Natural killer cell (primary cell): ENCODE measurements at regions of chr12 and their contacts with region 1.

Region 1: DNA sequence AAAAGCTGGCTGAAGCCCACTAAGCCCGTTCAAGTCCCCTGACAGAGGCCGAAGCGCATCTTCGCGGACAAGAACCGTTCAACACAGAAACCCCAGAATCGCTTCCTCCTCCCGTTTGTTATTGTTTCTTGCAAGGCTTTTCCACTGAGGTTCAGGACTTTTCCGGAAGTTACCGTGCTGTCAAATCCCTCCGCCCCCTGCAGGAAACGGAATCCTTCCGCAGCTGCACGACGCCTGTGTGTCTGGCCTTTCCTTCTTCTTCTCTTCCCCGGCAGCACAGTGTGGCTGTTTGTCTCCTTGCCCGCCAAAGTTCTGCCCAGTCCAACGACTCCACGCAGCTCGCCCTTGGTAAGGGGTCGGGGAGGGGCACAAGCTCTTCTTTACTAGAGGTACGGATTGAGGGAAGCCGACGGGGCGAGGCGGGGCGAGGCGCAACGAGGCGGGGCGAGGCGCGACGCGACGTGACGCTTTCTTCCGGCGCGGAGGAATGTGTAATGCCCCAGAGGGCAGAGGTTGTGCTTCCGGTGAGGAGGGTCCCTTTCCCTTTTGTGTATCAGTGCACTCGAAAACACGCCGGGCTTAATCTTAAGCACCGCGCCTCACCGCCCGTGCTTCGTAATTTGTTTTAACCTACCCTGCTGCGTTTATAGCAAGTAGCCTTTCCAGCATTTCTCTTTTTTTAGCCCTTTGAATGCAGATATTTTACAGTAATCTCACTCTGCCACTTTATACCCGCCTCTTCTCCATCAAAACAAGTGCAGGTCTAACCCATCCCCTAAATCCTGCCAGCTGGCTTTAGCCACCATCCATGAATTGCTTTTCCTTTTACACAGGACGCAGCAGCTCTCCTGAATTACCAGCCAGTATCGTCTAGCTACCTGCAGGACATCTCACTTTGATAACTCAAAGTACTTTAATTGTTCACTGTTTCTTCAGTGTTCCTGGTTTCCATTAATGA is at the start of gene KDM5A:
- DNase-seq: peak; percentile 87 to 95
- ATAC-seq: peak; percentile 90 to 94 (median 91)
- H3K4me3 ChIP-seq: peak within 1 kb of the TSS; percentile 77
- H3K4me3 Mint-ChIP-seq: peak within 1 kb of the TSS; percentile 98
- H3K27ac ChIP-seq: peak within 1 kb of the TSS; percentile 89
- H3K27ac Mint-ChIP-seq: peak within 1 kb of the TSS; percentile 99
- H3K4me1 ChIP-seq: peaks cover 9% of the 10 kb centered on the region
- H3K4me1 Mint-ChIP-seq: peaks cover 38 to 43% of the 10 kb centered on the region in 2 donors
- H3K27me3 ChIP-seq: no peaks in the 10 kb centered on the region
- H3K27me3 Mint-ChIP-seq: no peaks in the 10 kb centered on the region
- CTCF ChIP-seq: no peak
- total RNA-seq, gene KDM5A: 175 to 194 (median 184) TPM

Region 2: DNA sequence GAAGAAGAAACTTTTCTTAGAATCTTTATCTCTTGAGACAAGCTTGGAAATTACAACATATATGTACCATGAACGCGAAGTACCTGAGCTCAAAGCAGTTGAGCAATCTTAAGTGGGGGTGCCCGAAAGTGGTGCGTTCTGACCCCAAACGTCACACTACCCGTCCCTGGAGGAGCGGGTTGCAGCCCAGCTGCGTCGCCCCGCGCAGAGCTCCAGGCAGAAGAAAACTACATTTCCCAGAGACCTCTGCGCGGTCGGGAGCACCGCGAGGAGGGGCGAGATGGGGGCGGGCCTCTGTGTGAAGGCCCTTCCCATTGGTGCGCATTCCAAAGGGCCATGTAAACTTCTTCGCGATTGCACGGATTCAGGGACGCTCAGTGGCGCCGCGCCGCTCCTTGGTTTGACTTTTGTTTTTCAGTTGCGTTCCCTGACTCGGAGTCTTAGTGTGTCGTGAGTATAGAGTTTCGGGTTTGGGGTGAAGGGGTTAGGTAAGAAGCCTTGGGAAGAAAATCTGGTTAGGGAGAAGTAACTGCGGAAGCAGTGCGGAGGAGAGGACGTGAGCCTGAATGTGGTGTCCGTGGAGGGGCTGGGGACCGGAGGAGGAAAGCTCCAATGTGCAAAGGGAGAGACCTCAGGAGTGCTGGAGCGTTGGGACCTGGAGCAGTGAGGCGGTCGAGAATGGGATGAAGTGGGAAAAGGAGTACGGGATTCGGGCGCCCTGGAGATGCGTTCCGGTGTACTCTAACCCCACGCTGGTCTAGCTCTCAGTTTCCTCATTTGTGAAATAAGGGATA is 12.0 kb after region 1 on chr12 and contains the start of gene CCDC77:
- intact Hi-C with region 1: loop called (anchors 1 kb)
- DNase-seq: peak; percentile 95 to 97
- ATAC-seq: peak; percentile 100
- H3K4me3 ChIP-seq: peak within 1 kb of the TSS; percentile 79
- H3K4me3 Mint-ChIP-seq: peak within 1 kb of the TSS; percentile 1
- H3K27ac ChIP-seq: peak within 1 kb of the TSS; percentile 42
- H3K27ac Mint-ChIP-seq: no peak within 1 kb of the TSS
- H3K4me1 ChIP-seq: peaks cover 10% of the 10 kb centered on the region
- H3K4me1 Mint-ChIP-seq: no peaks in the 10 kb centered on the region
- H3K27me3 ChIP-seq: no peaks in the 10 kb centered on the region
- H3K27me3 Mint-ChIP-seq: no peaks in the 10 kb centered on the region
- CTCF ChIP-seq: no peak
- total RNA-seq, gene CCDC77: 10.9 to 18.5 (median 15.1) TPM